Calu3 (cell line): ENCODE measurements at regions of chr9 and their contacts with region 1.

Region 1: GRCh38 chr9:73023025-73023541 is 70.2 kb upstream of the ALDH1A1 start:
- DNase-seq: peak; percentile 61
- H3K4me3 Mint-ChIP-seq: no peak overlapping the region
- H3K27ac Mint-ChIP-seq: peak overlapping the region; percentile 3
- H3K4me1 Mint-ChIP-seq: peaks cover 13% of the 10 kb centered on the region
- H3K27me3 Mint-ChIP-seq: no peaks in the 10 kb centered on the region
- CTCF ChIP-seq: peak; percentile 67

Region 2: GRCh38 chr9:72290311-72290710 is 732.8 kb before region 1 on chr9:
- CTCF ChIA-PET with region 1: no interaction called
- intact Hi-C with region 1: no loop called
- DNase-seq: no peak
- H3K4me3 Mint-ChIP-seq: no peak overlapping the region
- H3K27ac Mint-ChIP-seq: no peak overlapping the region
- H3K4me1 Mint-ChIP-seq: peaks cover 24% of the 10 kb centered on the region
- H3K27me3 Mint-ChIP-seq: no peaks in the 10 kb centered on the region
- CTCF ChIP-seq: no peak

Region 3: DNA sequence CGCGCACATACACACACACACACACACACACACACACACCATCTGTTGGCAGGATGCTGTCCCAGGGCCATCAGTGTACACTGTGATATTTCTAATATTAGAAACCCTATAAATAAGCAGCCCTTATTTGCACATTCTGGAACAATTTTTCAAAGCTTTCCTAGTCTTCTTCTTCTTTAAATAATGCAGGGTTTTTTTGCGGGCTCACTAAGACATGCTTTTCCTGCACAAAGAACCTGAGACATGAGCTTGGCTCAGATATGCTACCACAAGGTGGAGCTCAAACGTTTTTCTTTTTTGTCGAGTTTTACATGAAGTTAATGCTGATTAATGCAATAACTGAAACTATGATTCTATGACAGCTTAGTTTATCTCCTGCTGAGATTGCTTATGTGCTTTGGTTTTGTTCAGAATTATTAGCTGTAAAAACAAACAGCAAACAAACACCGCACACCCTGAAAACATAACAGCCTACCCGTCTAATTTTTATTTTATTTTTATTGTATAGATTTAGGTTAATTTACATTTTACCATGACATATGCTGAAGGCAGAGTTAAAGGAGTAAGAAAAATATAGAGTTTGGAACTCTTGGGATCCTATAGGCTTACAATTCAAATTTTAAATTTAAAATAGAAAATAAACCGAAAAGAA is 166.0 kb before region 1 on chr9:
- CTCF ChIA-PET with region 1: interaction called, 6 read pairs
- intact Hi-C with region 1: loop called (anchors 5 kb)
- DNase-seq: peak; percentile 45
- H3K4me3 Mint-ChIP-seq: no peak overlapping the region
- H3K27ac Mint-ChIP-seq: no peak overlapping the region
- H3K4me1 Mint-ChIP-seq: peaks cover 23% of the 10 kb centered on the region
- H3K27me3 Mint-ChIP-seq: no peaks in the 10 kb centered on the region
- CTCF ChIP-seq: no peak

Region 4: DNA sequence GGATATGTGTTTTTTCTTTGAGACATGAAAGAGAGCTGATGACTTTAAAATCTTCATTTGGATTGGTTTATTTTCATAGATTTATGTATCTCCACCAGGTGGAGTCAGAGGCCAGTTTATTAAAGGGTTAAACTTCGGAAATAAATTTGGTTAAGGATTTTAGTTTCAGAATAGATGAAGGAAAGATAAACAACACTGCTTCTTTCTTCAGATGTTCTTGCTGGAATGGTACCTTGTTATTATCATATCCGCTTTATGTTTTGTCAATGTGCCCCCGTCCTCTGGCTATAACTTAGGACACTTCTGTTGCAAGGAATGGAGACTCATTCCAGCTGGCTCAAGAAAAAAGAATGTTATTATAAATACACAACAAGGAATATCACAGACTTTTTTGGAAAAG is 151.4 kb before region 1 on chr9:
- CTCF ChIA-PET with region 1: interaction called, 10 read pairs
- intact Hi-C with region 1: loop called (anchors 1 kb)
- DNase-seq: peak; percentile 1
- H3K4me3 Mint-ChIP-seq: no peak overlapping the region
- H3K27ac Mint-ChIP-seq: no peak overlapping the region
- H3K4me1 Mint-ChIP-seq: peaks cover 6% of the 10 kb centered on the region
- H3K27me3 Mint-ChIP-seq: no peaks in the 10 kb centered on the region
- CTCF ChIP-seq: peak; percentile 51

Region 5: GRCh38 chr9:72983512-72984225 is 39.4 kb before region 1 on chr9:
- CTCF ChIA-PET with region 1: no interaction called
- intact Hi-C with region 1: loop called (anchors 5 kb)
- DNase-seq: no peak
- H3K4me3 Mint-ChIP-seq: no peak overlapping the region
- H3K27ac Mint-ChIP-seq: peak overlapping the region; percentile 52
- H3K4me1 Mint-ChIP-seq: peaks cover 39% of the 10 kb centered on the region
- H3K27me3 Mint-ChIP-seq: no peaks in the 10 kb centered on the region
- CTCF ChIP-seq: no peak

Region 6: GRCh38 chr9:73081979-73082657 is 59.0 kb after region 1 on chr9:
- CTCF ChIA-PET with region 1: no interaction called
- intact Hi-C with region 1: loop called (anchors 1 kb)
- DNase-seq: peak; percentile 23
- H3K4me3 Mint-ChIP-seq: no peak overlapping the region
- H3K27ac Mint-ChIP-seq: no peak overlapping the region
- H3K4me1 Mint-ChIP-seq: peaks cover 26% of the 10 kb centered on the region
- H3K27me3 Mint-ChIP-seq: no peaks in the 10 kb centered on the region
- CTCF ChIP-seq: no peak